Stomach (tissue), 19 donors: ENCODE measurements at regions of chr12 and their contacts with region 1.

Region 1: GRCh38 chr12:4538207-4539160 is at the start of gene RAD51AP1:
- DNase-seq: peak; percentile 94 to 99
- H3K4me3 ChIP-seq: peak within 1 kb of the TSS; percentile 63 to 85 (median 72)
- H3K27ac ChIP-seq: peak within 1 kb of the TSS; percentile 63 to 96 (median 93)
- H3K4me1 ChIP-seq: peaks cover 7 to 31% (median 24%) of the 10 kb centered on the region in 4 donors
- H3K27me3 ChIP-seq: no peaks in the 10 kb centered on the region
- CTCF ChIP-seq: no peak
- EP300 ChIP-seq: no peak
- POLR2A ChIP-seq: no peak
- total RNA-seq, gene RAD51AP1: 4.6 to 20.2 (median 10.6) TPM in 4 of 5 donors, not detected in the other

Region 2: DNA sequence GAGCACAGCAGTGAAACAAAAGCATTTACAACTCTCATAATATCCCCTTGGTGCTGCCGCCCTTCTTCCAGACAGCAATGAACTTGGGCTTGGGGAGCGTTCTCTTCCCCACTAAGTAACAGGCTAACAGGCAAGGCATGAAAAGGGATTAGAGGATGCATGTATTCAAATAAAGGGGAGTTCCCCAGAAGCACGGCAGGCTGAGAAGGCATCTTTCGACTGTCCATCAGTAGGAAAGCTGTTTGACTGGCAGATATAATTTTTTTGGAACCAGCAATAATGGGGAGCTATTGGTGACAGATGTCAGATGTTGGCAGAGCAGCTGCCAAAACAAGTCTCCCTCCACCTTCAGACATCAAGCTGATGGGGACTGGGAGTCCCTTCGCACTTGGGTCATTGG is 226.7 kb before region 1 on chr12:
- intact Hi-C with region 1: loop called (anchors 10 kb)
- DNase-seq: no peak
- H3K4me3 ChIP-seq: no peak overlapping the region
- H3K27ac ChIP-seq: no peak overlapping the region
- H3K4me1 ChIP-seq: peaks cover 0 to 19% (median 7%) of the 10 kb centered on the region in 4 donors
- H3K27me3 ChIP-seq: no peaks in the 10 kb centered on the region
- CTCF ChIP-seq: no peak
- EP300 ChIP-seq: no peak
- POLR2A ChIP-seq: no peak